Heart right ventricle (tissue), 16 donors: ENCODE measurements at regions of chr9 and their contacts with region 1.

Region 1: DNA sequence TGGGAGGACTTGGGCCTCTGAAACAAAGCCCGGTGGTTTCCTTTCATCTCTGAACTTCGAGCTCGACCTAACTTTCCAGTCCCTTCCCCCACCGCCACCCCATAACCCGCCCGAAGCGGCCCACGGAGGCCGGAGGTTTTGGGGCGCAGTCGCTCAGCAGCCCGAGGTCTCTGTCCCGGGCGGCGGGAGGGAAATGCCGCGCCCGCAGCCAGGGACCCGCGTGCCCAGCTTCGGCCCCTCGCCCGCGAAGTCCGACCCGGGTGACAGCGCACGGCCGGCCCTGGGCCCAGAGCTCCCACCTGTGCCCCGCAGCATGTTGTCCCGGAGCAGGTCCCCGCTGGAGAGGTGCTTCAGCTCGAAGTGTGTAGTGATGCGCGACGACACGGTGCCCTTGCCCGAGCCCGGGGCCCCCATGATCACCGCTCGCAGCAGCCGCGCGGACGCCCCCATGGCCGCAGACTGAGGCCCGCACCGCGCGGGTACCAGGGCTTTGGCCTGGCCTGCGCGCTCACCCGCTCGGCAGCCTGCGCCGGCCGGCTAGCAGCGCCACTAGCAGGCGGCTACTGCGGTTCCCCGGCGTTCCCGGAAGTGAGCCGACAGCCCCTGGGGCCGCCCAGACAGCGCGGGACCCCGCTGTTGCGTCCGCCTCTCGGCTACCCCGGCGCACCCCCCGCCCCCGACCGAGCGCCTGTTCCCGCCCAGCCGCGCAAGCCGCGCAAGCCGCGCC is at the start of gene AK3:
- DNase-seq: peak; percentile 90 to 91
- ATAC-seq: peak; percentile 93 to 97 (median 95)
- H3K4me3 ChIP-seq: peak within 1 kb of the TSS; percentile 79 to 98 (median 95)
- H3K27ac ChIP-seq: peak within 1 kb of the TSS; percentile 84 to 96 (median 95)
- H3K4me1 ChIP-seq: peaks cover 0 to 44% (median 23%) of the 10 kb centered on the region in 9 donors
- H3K27me3 ChIP-seq: no peaks in the 10 kb centered on the region
- CTCF ChIP-seq: peak in 5 of 9 donors; percentile 30 to 62 (median 56)
- total RNA-seq, gene AK3: 125 to 217 (median 146) TPM

Region 2: GRCh38 chr9:4382722-4383317 is 358.0 kb before region 1 on chr9:
- intact Hi-C with region 1: loop called in 3 of 10 experiments (anchors 10 kb)
- DNase-seq: no peak
- ATAC-seq: peak in 3 of 8 donors; percentile 34 to 50 (median 47)
- H3K4me3 ChIP-seq: no peak overlapping the region
- H3K27ac ChIP-seq: no peak overlapping the region
- H3K4me1 ChIP-seq: no peaks in the 10 kb centered on the region
- H3K27me3 ChIP-seq: peaks cover 0 to 3% (median 0%) of the 10 kb centered on the region in 7 donors
- CTCF ChIP-seq: peak; percentile 12 to 75 (median 57)

Region 3: GRCh38 chr9:4604678-4605095 is 136.1 kb before region 1 on chr9:
- intact Hi-C with region 1: loop called in 1 of 10 experiments (anchors 10 kb)
- DNase-seq: peak in 1 of 2 donors; percentile 80
- ATAC-seq: peak in 7 of 8 donors; percentile 58 to 85 (median 74)
- H3K4me3 ChIP-seq: no peak overlapping the region
- H3K27ac ChIP-seq: no peak overlapping the region
- H3K4me1 ChIP-seq: no peaks in the 10 kb centered on the region
- H3K27me3 ChIP-seq: no peaks in the 10 kb centered on the region
- CTCF ChIP-seq: peak; percentile 71 to 80 (median 75)

Region 4: DNA sequence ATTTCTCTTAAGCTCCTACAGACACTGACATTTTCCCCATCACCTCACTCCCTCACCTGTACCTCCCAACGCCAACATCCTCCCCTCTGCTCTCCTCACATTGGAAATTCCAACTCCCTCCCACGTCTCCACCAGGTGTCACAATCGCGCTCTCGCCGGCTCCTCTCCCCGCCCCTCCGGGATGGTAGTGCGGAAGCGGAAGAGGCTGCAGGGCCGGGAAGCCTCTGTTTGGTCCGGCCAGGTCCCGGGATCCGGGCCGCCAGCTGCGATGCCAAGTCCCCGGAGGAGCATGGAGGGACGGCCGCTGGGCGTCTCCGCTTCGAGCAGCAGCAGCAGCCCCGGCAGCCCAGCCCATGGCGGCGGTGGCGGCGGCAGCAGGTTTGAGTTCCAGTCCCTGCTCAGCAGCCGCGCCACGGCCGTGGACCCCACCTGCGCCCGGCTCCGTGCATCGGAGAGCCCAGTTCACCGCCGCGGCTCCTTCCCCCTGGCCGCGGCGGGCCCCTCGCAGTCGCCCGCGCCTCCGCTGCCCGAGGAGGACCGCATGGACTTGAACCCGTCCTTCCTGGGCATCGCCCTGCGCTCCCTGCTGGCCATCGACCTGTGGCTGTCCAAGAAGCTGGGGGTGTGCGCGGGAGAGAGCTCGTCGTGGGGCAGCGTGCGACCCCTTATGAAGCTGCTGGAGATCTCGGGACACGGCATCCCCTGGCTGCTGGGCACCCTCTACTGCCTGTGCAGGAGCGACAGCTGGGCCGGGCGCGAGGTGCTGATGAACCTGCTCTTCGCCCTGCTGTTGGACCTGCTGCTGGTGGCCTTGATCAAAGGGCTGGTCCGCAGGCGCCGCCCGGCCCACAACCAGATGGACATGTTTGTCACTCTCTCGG is 78.5 kb before region 1 on chr9 and contains the start of gene PLPP6:
- intact Hi-C with region 1: loop called in 4 of 10 experiments (anchors 1 to 5 kb)
- DNase-seq: peak; percentile 88 to 89
- ATAC-seq: peak; percentile 94 to 97 (median 95)
- H3K4me3 ChIP-seq: peak within 1 kb of the TSS; percentile 75 to 97 (median 90)
- H3K27ac ChIP-seq: peak within 1 kb of the TSS; percentile 30 to 91 (median 84)
- H3K4me1 ChIP-seq: peaks cover 0 to 56% (median 43%) of the 10 kb centered on the region in 9 donors
- H3K27me3 ChIP-seq: no peaks in the 10 kb centered on the region
- CTCF ChIP-seq: peak; percentile 24 to 74 (median 58)
- total RNA-seq, gene PLPP6: 2.2 to 4.1 (median 2.6) TPM

Region 5: DNA sequence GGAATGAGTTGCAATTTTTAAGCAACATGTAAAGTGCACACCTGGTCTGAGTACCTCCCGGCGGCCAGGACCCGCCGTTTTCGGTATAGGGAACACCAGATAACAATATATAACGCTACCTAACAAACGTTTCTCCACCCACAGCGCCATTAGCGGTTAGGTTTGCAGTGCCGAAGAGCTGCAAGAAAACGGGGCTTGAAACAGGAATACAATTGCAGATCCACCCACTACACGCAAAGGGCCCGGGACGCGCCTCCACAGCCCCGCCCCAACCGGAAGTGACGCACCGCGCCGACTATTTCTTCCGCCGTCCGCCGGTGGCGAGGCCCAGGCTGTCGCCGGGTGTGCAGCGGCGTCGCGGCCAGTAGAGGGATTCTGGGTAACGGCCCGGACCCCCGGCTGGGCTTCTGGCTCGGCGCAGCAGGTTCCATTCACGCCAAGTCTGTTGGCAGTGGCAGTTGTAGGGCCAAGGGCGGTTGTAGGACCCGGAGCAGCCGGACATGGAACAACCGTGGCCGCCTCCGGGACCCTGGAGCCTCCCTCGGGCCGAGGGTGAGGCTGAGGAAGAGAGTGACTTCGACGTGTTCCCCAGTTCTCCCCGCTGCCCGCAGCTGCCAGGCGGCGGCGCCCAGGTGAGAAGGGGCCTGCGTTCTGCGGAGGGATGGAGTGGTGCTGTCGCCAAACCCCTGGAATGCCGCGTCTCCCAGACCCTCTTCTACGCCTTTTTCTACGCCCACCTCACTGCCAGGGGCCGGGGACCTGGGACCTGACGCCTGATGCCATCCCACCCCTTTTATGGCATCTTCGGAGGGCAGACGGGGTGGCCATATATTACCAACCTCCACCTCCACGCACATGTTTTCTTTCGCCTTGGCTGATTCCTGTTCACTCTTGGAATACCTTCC is 61.3 kb before region 1 on chr9 and contains the start of gene CDC37L1:
- intact Hi-C with region 1: loop called in 7 of 10 experiments (anchors 5 kb)
- DNase-seq: peak; percentile 99
- ATAC-seq: peak; percentile 99 to 100 (median 99)
- H3K4me3 ChIP-seq: peak within 1 kb of the TSS; percentile 67 to 96 (median 78)
- H3K27ac ChIP-seq: peak within 1 kb of the TSS; percentile 91 to 100 (median 96)
- H3K4me1 ChIP-seq: peaks cover 0 to 40% (median 26%) of the 10 kb centered on the region in 9 donors
- H3K27me3 ChIP-seq: no peaks in the 10 kb centered on the region
- CTCF ChIP-seq: peak; percentile 49 to 81 (median 72)
- total RNA-seq, gene CDC37L1: 29.8 to 58.4 (median 36.6) TPM

Region 6: GRCh38 chr9:4689687-4690104 is 51.1 kb before region 1 on chr9:
- intact Hi-C with region 1: loop called in 4 of 10 experiments (anchors 5 kb)
- DNase-seq: no peak
- ATAC-seq: peak in 1 of 8 donors; percentile 43
- H3K4me3 ChIP-seq: no peak overlapping the region
- H3K27ac ChIP-seq: peak overlapping the region in 2 of 10 donors; percentile 4 to 6
- H3K4me1 ChIP-seq: peaks cover 0 to 65% (median 37%) of the 10 kb centered on the region in 9 donors
- H3K27me3 ChIP-seq: no peaks in the 10 kb centered on the region
- CTCF ChIP-seq: no peak

Region 7: DNA sequence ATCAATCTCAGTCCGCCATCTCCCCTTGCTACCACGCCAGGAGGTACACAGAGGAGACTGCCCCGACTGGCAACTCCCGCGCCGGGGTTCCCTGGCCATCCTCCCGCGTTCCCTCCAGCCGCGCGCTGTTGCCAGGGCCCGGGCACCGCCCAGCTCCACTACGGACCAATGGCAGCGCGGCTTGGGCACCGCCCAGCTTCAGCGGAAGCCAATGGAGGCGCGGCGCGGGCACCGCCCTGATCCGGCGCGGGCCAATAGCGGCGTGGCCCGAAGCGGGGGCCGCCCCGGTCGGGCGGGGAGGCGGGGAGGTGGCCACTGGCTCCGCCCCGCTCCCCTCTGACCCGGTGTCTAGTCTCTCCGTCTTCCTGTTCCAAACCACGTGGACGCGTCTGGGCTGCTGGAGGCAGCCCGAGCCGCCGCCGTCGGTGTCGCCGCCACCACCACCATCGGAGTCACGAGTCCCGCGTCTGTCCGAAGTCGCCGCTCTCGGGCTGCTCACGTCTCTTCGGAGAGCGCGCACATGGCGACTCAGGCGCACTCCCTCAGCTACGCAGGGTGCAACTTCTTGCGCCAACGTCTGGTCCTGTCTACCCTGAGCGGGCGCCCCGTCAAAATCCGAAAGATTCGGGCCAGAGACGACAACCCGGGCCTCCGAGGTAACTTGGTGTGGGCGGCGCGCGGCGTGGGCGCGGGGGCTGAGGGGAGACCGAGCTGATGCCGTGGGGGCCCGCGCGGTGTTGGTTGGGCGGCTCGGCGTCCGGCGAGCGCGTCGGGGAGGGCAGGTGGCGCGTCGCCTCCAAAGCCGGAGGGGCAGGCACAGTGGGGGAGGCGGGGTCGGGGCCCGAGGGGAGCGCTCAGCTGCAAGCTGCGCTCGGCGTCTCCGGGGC is 52.0 kb after region 1 on chr9 and contains the start of gene RCL1:
- intact Hi-C with region 1: loop called in 2 of 10 experiments (anchors 10 kb)
- DNase-seq: peak; percentile 93 to 97
- ATAC-seq: peak; percentile 99 to 100 (median 99)
- H3K4me3 ChIP-seq: peak within 1 kb of the TSS; percentile 69 to 97 (median 82)
- H3K27ac ChIP-seq: peak within 1 kb of the TSS; percentile 42 to 87 (median 84)
- H3K4me1 ChIP-seq: peaks cover 0 to 32% (median 20%) of the 10 kb centered on the region in 9 donors
- H3K27me3 ChIP-seq: peaks cover 0 to 2% (median 0%) of the 10 kb centered on the region in 7 donors
- CTCF ChIP-seq: no peak
- total RNA-seq, gene RCL1: 4.8 to 9.9 (median 6.8) TPM